IMR-90 (cell line): ENCODE measurements at regions of chr11 and their contacts with region 1.

Region 1: DNA sequence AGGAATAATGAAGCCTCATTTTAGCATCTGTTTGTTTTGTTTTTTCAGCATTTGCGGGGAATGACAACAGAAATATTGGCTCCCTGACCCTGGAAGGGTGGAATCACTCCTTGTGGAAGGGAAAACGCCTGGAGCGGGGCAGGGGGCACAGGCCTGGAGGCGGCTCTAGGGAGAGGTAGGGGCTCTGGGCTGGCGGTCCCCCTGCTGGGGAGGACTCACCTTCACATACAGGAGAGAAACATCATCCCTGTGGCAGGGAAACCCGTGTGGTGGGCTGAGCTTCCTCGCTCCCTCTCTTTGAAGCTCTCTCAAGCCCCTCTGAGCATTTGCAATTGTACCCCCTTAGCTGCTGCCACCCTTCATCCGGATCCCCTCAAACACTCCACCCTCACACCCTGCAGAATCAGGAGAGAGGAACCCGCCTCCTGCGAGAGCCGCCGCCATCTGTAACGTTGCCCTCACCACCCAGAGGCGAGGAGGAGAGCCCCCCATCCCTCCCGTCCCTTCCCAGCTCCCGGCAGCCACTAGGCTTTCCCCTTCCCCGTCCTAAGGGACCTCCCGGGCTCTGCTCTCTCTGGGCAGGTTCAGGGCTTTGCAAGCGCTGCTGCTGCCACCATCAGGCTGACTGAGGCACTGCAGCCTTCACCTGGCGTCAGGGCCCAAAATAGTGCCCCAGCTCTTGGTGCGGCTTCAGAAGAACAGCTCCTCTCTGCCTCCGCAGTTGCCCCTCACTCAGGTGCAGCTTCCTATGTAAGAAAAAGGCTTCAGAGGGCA is 10.4 kb downstream of the KIRREL3 start:
- DNase-seq: peak; percentile 77
- ATAC-seq: peak; percentile 80
- H3K4me3 ChIP-seq: peak overlapping the region; percentile 27
- H3K27ac ChIP-seq: peak overlapping the region; percentile 48
- H3K4me1 ChIP-seq: peaks cover 21% of the 10 kb centered on the region
- H3K27me3 ChIP-seq: no peaks in the 10 kb centered on the region
- CTCF ChIP-seq: peak; percentile 97
- POLR2A ChIP-seq: peak; percentile 24; the same call in 1 of the 2 replicates
- RAD21 ChIP-seq: peak; percentile 93

Region 2: GRCh38 chr11:126303623-126304456 is 686.3 kb before region 1 on chr11 and contains the start of gene DCPS:
- CTCF ChIA-PET with region 1: no interaction called
- POLR2A ChIA-PET with region 1: no interaction called
- dilution Hi-C with region 1: no loop called
- in situ Hi-C with region 1: loop called (anchors 10 kb)
- intact Hi-C with region 1: no loop called
- DNase-seq: peak; percentile 88
- ATAC-seq: peak; percentile 99
- H3K4me3 ChIP-seq: peak within 1 kb of the TSS; percentile 55
- H3K27ac ChIP-seq: peak within 1 kb of the TSS; percentile 85
- H3K4me1 ChIP-seq: peaks cover 3% of the 10 kb centered on the region; the same call in 1 of the 2 replicates
- H3K27me3 ChIP-seq: no peaks in the 10 kb centered on the region
- CTCF ChIP-seq: no peak
- POLR2A ChIP-seq: peak; percentile 90
- RAD21 ChIP-seq: no peak
- total RNA-seq, gene DCPS: 18.6 and 19.7 TPM in 2 replicates

Region 3: DNA sequence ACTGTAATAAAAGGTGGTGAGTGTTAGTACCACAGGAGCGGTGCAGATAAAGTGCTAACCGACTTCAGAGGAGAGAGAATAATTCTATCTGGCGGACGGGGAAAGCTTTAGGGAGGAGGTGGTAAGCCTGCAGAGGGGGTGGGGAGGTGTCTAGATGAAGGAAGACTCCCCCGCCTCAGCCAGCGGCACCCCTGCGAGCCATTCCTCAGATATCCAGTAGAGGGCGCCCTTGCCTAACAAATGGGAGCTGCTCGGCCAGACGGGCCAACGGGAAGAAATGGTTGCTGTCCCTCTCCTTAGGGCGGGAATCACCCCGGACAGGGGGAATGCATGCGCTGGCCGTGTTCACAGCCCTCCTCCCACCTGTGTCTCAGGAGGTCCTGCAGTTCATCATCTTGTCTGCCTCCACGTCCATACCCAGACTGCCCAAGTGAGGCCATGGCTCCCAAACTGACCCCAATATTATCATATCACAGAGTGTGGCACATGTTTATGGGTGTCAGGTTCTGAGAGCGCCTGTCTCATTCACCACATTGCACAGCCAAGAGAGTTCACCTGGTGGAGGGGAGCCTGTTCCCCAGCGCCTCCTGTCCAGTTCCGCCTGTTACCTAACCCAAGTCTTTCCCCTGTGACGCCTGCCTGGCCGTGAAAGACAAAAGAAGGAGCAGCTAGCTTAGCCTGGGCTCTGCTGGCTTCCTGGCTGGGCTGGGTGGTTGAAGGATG is 549.2 kb before region 1 on chr11:
- CTCF ChIA-PET with region 1: no interaction called
- POLR2A ChIA-PET with region 1: no interaction called
- dilution Hi-C with region 1: no loop called
- in situ Hi-C with region 1: loop called (anchors 25 kb)
- intact Hi-C with region 1: loop called (anchors 2 kb)
- DNase-seq: peak; percentile 59
- ATAC-seq: peak; percentile 96
- H3K4me3 ChIP-seq: no peak overlapping the region
- H3K27ac ChIP-seq: no peak overlapping the region
- H3K4me1 ChIP-seq: no peaks in the 10 kb centered on the region
- H3K27me3 ChIP-seq: no peaks in the 10 kb centered on the region; the same call in 1 of the 2 replicates
- CTCF ChIP-seq: peak; percentile 96
- POLR2A ChIP-seq: no peak
- RAD21 ChIP-seq: peak; percentile 97

Region 4: GRCh38 chr11:126716456-126717083 is 273.6 kb before region 1 on chr11:
- CTCF ChIA-PET with region 1: interaction called, 16 read pairs
- POLR2A ChIA-PET with region 1: no interaction called
- dilution Hi-C with region 1: no loop called
- in situ Hi-C with region 1: loop called (anchors 5 kb)
- intact Hi-C with region 1: loop called (anchors 1 kb)
- DNase-seq: peak; percentile 43
- ATAC-seq: peak; percentile 48
- H3K4me3 ChIP-seq: no peak overlapping the region
- H3K27ac ChIP-seq: no peak overlapping the region
- H3K4me1 ChIP-seq: peaks cover 6% of the 10 kb centered on the region
- H3K27me3 ChIP-seq: no peaks in the 10 kb centered on the region
- CTCF ChIP-seq: peak; percentile 67
- POLR2A ChIP-seq: no peak
- RAD21 ChIP-seq: peak; percentile 76

Region 5: DNA sequence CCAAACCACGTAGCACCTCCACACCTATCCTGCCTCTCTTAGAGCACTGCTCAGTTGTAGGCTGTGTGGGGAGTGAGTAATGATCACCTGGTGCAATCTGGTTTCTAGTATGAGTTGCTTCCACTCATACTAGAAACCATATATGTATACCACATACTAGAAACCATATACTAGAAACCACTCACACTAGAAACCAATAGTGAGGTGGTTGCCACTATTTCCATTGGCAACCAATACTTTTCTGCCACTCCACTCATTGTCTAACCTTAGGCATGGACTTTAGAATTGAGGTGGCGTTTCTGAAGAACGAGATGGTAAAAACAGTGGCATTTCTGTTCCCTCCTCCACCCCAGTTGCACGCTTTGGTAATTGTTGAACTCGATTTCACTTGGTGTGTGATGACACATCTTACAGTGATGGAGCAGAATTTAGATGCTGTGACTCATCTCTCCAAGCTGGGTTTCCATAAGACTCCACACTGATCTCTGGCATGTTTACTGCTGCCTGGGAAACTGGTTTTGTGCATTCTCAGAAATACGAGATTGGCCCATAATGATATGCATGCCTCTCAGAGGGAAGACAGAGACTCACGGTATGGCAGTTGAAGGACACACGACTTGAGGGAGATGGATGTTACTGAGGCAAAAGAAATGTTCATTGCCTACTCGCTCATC is 72.5 kb before region 1 on chr11:
- CTCF ChIA-PET with region 1: no interaction called
- POLR2A ChIA-PET with region 1: no interaction called
- dilution Hi-C with region 1: no loop called
- in situ Hi-C with region 1: no loop called
- intact Hi-C with region 1: loop called (anchors 5 kb)
- DNase-seq: peak; percentile 99
- ATAC-seq: peak; percentile 85
- H3K4me3 ChIP-seq: peak overlapping the region; percentile 5; the same call in 1 of the 2 replicates
- H3K27ac ChIP-seq: peak overlapping the region; percentile 96
- H3K4me1 ChIP-seq: peaks cover 16% of the 10 kb centered on the region
- H3K27me3 ChIP-seq: no peaks in the 10 kb centered on the region
- CTCF ChIP-seq: no peak
- POLR2A ChIP-seq: 0 out of 2 replicates have a peak, but pooled peaks have one; percentile 57
- RAD21 ChIP-seq: peak; percentile 28

Region 6: GRCh38 chr11:126938717-126939116 is 51.4 kb before region 1 on chr11:
- CTCF ChIA-PET with region 1: no interaction called
- POLR2A ChIA-PET with region 1: no interaction called
- dilution Hi-C with region 1: no loop called
- in situ Hi-C with region 1: no loop called
- intact Hi-C with region 1: no loop called
- DNase-seq: no peak
- ATAC-seq: no peak
- H3K4me3 ChIP-seq: no peak overlapping the region
- H3K27ac ChIP-seq: no peak overlapping the region
- H3K4me1 ChIP-seq: no peaks in the 10 kb centered on the region
- H3K27me3 ChIP-seq: no peaks in the 10 kb centered on the region
- CTCF ChIP-seq: no peak
- POLR2A ChIP-seq: no peak
- RAD21 ChIP-seq: no peak